ENCODE measurements at regions of chr10 and their contacts with region 1.

Region 1: GRCh38 chr10:89074120-89074519 is 83.5 kb downstream of the FAS start:
- DNase-seq: no peak
- H3K4me3 Mint-ChIP-seq: no peak overlapping the region
- H3K27ac Mint-ChIP-seq: no peak overlapping the region
- H3K4me1 Mint-ChIP-seq: peaks cover 6% of the 10 kb centered on the region
- H3K27me3 Mint-ChIP-seq: peaks cover 6% of the 10 kb centered on the region

Region 2: DNA sequence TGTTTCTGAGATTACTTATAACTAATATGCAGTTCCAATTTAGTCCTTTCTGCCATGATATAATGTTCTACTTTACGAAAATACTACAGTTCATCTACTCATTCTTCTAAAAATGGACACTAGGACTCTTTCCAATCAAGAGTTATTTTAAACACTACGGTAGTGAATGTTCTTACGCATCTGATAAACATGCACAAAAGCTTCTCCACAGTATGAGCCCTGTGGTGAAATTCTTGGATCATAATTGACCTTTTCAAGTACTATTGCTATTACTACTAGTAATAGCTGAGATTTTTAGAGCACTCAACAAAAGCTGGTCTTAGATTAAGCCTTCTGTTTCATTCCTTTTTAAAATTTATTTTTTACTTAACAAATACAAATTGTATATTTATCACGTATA is 26.6 kb after region 1 on chr10:
- CTCF ChIA-PET with region 1: no interaction called
- intact Hi-C with region 1: loop called (anchors 5 kb)
- DNase-seq: no peak
- H3K4me3 Mint-ChIP-seq: no peak overlapping the region
- H3K27ac Mint-ChIP-seq: no peak overlapping the region
- H3K4me1 Mint-ChIP-seq: no peaks in the 10 kb centered on the region
- H3K27me3 Mint-ChIP-seq: no peaks in the 10 kb centered on the region

Region 3: DNA sequence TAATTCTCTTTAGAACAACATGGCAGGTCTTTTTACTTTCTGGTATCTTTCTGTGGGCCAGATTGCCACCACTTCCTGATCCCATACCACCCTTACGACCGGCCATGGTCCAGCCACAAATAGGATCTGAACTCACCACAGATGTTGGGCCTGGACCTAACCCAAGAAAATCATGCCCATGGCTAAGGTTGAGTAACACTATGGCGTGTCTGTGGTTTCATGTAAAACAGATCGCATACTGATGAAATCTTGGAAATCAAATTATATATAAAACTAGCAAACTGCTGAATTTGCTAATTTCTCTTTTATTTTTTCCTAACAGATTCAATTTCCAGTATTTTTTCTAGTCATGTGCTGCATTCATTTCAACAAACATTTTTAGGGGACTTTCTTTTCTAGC is 55.8 kb after region 1 on chr10:
- CTCF ChIA-PET with region 1: no interaction called
- intact Hi-C with region 1: loop called (anchors 5 kb)
- DNase-seq: no peak
- H3K4me3 Mint-ChIP-seq: no peak overlapping the region
- H3K27ac Mint-ChIP-seq: no peak overlapping the region
- H3K4me1 Mint-ChIP-seq: no peaks in the 10 kb centered on the region
- H3K27me3 Mint-ChIP-seq: peaks cover 7% of the 10 kb centered on the region

Region 4: GRCh38 chr10:89163265-89163995 is 89.3 kb after region 1 on chr10:
- CTCF ChIA-PET with region 1: no interaction called
- intact Hi-C with region 1: loop called (anchors 5 kb)
- DNase-seq: peak; percentile 69
- H3K4me3 Mint-ChIP-seq: peak overlapping the region; percentile 33
- H3K27ac Mint-ChIP-seq: peak overlapping the region; percentile 5
- H3K4me1 Mint-ChIP-seq: peaks cover 36% of the 10 kb centered on the region
- H3K27me3 Mint-ChIP-seq: peaks cover 7% of the 10 kb centered on the region